OCI-LY7 (cell line): ENCODE measurements at regions of chr18 and their contacts with region 1.

Region 1: DNA sequence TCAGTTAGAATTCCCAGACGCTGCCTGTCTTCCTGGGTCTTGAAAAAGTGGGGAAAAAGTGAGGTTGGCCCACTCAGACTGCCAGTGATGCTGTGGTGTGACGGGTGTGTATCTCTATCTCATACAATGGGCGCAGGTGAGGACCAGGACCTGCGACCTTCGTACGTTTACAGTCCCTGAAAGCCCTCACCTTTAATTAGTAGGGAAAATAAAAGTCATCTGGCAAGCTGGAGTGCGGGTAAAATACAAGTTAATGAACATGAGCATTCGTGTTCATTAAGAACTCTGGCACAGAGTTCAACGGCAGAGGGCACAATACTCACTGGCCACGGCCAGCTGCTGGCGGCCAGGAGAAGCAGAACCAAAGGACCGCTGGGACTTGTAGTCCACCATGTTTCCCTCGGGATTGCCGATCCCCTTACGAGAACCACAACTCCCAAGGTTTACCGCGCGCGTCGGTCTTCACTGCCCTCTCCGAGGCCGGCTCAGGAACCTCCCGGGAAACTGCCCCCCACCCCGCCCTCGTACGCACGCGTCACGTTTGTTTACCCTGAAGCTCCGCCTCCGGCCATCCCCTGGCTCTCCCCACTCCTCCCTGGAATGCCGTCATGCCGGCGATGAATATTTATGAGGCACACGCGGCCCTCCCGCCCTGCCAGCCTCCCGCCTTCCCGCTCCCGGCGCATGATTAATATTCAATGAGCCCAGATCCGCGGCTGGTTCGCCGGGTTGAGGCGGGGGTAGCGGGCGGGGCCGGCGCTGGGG is 488 bp upstream of the PHLPP1 start:
- DNase-seq: peak; percentile 91
- H3K4me3 ChIP-seq: peak overlapping the region; percentile 72
- H3K27ac ChIP-seq: peak overlapping the region; percentile 37
- H3K4me1 ChIP-seq: peaks cover 15% of the 10 kb centered on the region
- CTCF ChIP-seq: peak; percentile 66

Region 2: GRCh38 chr18:62510789-62511188 is 204.1 kb before region 1 on chr18:
- CTCF ChIA-PET with region 1: interaction called, 13 read pairs
- POLR2A ChIA-PET with region 1: no interaction called
- intact Hi-C with region 1: no loop called
- DNase-seq: no peak
- H3K4me3 ChIP-seq: no peak overlapping the region
- H3K27ac ChIP-seq: no peak overlapping the region
- H3K4me1 ChIP-seq: peaks cover 11% of the 10 kb centered on the region
- CTCF ChIP-seq: no peak

Region 3: GRCh38 chr18:62584241-62585120 is 130.4 kb before region 1 on chr18:
- CTCF ChIA-PET with region 1: no interaction called
- POLR2A ChIA-PET with region 1: interaction called, 3 read pairs
- intact Hi-C with region 1: loop called (anchors 2 kb)
- DNase-seq: peak; percentile 58
- H3K4me3 ChIP-seq: no peak overlapping the region
- H3K27ac ChIP-seq: no peak overlapping the region
- H3K4me1 ChIP-seq: peaks cover 3% of the 10 kb centered on the region
- CTCF ChIP-seq: peak; percentile 79

Region 4: GRCh38 chr18:62838475-62839098 is 123.7 kb after region 1 on chr18:
- CTCF ChIA-PET with region 1: no interaction called
- POLR2A ChIA-PET with region 1: no interaction called
- intact Hi-C with region 1: no loop called
- DNase-seq: no peak
- H3K4me3 ChIP-seq: no peak overlapping the region
- H3K27ac ChIP-seq: no peak overlapping the region
- H3K4me1 ChIP-seq: no peaks in the 10 kb centered on the region
- CTCF ChIP-seq: no peak

Region 5: DNA sequence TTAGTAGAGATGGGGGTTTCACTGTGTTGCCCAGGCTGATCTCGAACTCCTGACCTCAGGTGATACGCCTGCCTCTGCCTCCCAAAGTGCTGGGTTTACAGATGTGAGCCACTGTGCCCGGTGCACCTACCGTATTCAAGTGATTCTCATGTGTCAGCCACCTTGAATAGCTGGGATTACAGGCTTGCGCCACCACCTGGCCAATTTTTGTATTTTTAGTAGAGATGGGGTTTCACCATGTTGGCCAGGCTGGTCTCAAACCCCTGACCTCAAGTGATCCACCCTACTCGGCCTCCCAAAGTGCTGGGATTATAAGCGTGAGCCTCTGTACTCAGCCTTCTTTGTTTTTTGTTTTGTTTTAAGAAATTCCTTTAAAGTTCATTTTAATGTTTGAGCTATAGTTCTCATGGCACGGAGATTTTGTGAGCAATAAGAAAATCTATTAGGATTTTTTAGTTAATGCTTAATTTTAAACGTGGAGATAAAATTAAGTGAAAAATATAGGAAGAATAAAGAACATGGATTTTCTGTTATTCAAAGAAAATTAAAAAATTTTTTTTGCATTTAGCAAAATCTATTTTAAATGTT is 243.1 kb after region 1 on chr18:
- CTCF ChIA-PET with region 1: no interaction called
- POLR2A ChIA-PET with region 1: no interaction called
- intact Hi-C with region 1: loop called (anchors 2 kb)
- DNase-seq: peak; percentile 32
- H3K4me3 ChIP-seq: no peak overlapping the region
- H3K27ac ChIP-seq: no peak overlapping the region
- H3K4me1 ChIP-seq: no peaks in the 10 kb centered on the region
- CTCF ChIP-seq: no peak; the same call in none of the 2 replicates

Region 6: DNA sequence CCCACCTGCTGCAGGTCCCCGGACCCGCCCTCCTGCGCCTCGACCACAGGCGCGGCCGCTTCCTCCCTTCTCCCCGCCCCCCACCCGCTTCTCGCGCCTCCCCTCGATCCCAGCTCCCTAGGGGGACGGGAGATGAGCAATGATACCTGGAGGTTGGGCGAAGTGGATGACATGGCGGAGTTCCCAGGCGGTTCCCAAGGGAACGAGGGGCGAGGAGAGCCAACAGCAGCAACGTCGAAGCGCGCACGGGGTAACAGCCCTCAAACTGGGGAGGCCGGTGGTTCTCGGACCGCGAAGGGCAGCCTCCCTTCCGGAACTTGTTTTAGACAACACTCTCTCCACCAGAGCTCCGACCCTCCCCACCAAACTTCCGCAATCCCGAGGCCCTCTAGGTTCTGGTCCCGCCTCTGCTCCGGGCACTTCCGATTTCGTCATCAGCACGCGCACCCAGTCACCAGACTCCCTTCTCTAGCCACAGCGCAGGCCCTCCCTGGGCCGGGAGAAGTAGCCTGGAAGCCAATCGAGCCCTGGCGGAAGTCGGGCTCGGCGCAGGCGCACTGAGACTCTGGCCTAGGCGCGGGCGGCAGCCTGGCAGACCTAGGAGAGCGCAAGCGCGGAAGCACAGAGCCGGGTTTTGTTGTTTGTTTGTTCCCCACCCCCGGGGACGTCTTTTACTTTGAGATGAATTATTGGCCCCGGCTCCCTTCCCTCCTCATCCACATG is 707.4 kb after region 1 on chr18 and contains the start of gene VPS4B:
- CTCF ChIA-PET with region 1: no interaction called
- POLR2A ChIA-PET with region 1: no interaction called
- intact Hi-C with region 1: loop called (anchors 5 kb)
- DNase-seq: peak; percentile 95
- H3K4me3 ChIP-seq: peak within 1 kb of the TSS; percentile 80
- H3K27ac ChIP-seq: peak within 1 kb of the TSS; percentile 67
- H3K4me1 ChIP-seq: peaks cover 7% of the 10 kb centered on the region
- CTCF ChIP-seq: no peak
- total RNA-seq, gene VPS4B: 10.7 and 12.3 TPM in 2 replicates